Ascending aorta (tissue), 2 donors: ENCODE measurements at regions of chr10 and their contacts with region 1.

Region 1: GRCh38 chr10:29667191-29667590 is 32.4 kb upstream of the SVIL start:
- DNase-seq: no peak
- H3K4me3 ChIP-seq: no peak overlapping the region
- H3K27ac ChIP-seq: peak overlapping the region; percentile 48 to 69
- H3K4me1 ChIP-seq: peaks cover 0 to 25% of the 10 kb centered on the region in 2 donors
- H3K27me3 ChIP-seq: no peaks in the 10 kb centered on the region
- CTCF ChIP-seq: no peak

Region 2: DNA sequence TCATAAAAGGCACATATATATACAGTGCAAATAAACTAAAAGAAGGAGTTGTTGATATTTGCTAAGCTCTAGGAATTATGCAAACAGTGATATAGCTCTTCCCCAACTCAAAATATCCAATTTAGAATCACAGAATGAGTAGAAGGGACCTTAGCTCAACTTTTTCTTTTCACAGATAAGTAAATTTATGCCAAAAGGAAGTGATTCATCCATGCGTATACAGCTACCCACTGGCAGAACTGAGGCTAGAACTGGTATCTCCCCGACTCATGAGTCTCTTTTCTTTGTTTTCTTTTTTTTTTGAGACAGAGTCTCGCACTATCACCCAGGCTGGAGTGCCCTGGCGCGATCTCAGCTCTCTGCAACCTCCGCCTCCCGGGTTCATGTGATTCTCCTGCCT is 21.8 kb after region 1 on chr10:
- intact Hi-C with region 1: loop called (anchors 2 kb)
- DNase-seq: no peak
- H3K4me3 ChIP-seq: no peak overlapping the region
- H3K27ac ChIP-seq: peak overlapping the region; percentile 47 to 84
- H3K4me1 ChIP-seq: peaks cover 15 to 37% of the 10 kb centered on the region in 2 donors
- H3K27me3 ChIP-seq: no peaks in the 10 kb centered on the region
- CTCF ChIP-seq: no peak